ENCODE measurements at regions of chr14 and their contacts with region 1.

Region 1: DNA sequence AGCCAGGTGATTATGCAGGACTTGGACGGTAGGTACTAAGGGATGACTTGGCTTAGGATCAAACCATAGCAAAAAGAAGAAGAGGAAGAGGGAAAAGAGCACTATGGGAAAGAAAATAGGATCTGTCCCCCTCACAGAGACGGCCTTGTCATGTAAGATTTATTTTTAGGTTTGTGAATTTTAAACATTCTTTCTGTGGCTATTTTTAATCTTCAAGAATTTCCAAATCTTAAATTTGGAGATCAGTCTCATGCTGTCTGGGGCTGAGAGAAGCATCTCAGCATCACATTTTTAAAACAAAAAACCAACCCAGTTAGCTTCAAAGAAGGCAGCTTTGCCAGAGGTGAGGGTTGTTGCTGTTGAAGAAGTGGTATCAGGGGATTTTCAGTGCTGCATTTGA is 52.6 kb upstream of the STRN3 start:
- DNase-seq: no peak
- ATAC-seq: no peak
- H3K4me3 ChIP-seq: no peak overlapping the region
- H3K27ac ChIP-seq: no peak overlapping the region
- H3K4me1 ChIP-seq: peaks cover 0 to 3% of the 10 kb centered on the region in 2 donors
- H3K27me3 ChIP-seq: no peaks in the 10 kb centered on the region
- CTCF ChIP-seq: no peak
- POLR2A ChIP-seq: no peak

Region 2: DNA sequence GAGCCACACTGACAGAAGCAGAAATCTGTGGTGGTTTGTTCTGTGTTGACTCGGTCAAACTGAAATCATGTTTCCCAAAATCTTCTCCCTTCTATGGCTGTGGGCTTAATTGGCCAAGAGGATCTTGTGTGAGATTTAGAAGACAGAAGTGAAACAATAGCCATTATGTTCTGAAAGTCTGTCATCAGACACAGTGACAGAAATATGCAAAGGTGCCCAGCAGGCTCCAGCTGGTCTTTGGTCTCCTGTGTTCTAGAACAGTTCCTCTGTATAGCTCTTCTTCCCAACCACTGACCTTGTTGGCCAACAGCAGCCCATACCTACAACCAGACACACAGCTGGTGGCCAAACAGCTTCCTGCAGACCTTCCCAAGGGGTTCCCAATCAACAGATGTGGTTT is 229.4 kb before region 1 on chr14:
- in situ Hi-C with region 1: no loop called
- intact Hi-C with region 1: no loop called
- DNase-seq: no peak
- ATAC-seq: no peak
- H3K4me3 ChIP-seq: no peak overlapping the region
- H3K27ac ChIP-seq: no peak overlapping the region
- H3K4me1 ChIP-seq: no peaks in the 10 kb centered on the region
- H3K27me3 ChIP-seq: no peaks in the 10 kb centered on the region
- CTCF ChIP-seq: no peak
- POLR2A ChIP-seq: no peak

Region 3: DNA sequence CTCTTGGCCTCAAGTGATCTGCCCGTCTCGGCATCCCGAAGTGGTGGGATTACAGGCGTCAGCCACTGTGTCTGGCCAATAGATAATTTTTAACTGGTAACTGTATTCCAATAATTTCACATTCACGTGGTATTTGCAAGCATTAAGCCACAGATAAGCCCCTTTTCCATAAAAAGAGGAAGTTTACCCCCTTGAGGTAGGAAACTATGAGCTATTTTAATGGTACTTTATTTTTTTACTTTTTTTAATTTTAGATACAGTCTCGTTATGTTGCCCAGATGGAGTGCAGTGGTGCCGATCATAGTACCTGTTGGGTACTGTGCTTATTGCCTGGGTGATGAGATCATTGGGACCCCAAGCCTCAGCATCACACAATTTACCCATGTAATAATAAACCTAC is 96.2 kb before region 1 on chr14:
- in situ Hi-C with region 1: loop called (anchors 5 kb)
- intact Hi-C with region 1: no loop called
- DNase-seq: no peak
- ATAC-seq: no peak
- H3K4me3 ChIP-seq: no peak overlapping the region
- H3K27ac ChIP-seq: peak overlapping the region in 1 of 4 donors; percentile 25
- H3K4me1 ChIP-seq: no peaks in the 10 kb centered on the region
- H3K27me3 ChIP-seq: no peaks in the 10 kb centered on the region
- CTCF ChIP-seq: no peak
- POLR2A ChIP-seq: no peak

Region 4: DNA sequence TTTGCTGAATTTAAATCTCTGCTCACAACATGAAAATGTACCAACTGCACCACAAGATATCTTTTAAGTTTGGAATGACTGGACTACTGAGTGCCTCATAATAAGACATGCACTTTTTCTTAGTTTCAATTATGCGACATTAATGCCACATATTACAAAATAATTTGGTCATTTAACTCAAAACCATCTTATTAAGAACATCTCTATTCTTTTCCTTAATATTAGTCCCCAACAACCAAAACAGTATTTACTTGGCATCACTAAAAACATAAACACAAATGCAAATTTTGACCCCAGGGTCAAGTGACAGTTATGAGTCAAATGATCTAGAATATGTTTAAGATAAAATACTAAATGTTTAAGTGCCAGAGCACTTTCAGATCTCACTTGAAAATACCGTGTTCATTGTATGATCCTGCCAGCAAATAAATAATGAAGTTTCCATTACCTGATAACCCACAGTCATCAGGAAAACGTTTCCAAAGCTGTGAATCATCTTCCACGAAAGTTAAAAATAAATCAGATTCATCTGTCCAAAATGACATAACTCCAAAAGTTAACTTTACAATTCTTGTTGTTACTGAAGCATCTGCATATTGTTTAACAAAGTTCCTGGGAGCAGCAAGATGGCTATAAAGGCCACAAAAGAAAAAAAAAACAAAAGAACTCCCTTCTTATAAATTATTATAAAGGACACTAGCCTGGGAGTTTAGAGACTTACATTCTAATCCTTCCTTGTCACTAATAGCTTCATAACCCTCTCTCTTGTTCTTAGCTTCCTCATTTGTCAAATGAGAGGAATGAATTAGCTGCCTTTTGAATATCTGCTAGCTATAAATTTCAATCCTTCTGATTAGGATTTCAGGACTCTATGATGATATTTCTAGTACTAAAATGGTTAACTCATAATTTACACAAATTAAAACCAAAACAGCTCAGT is 83.8 kb before region 1 on chr14:
- in situ Hi-C with region 1: no loop called
- intact Hi-C with region 1: no loop called
- DNase-seq: no peak
- ATAC-seq: peak; percentile 77 to 81
- H3K4me3 ChIP-seq: peak overlapping the region in 3 of 4 donors; percentile 2 to 22 (median 8)
- H3K27ac ChIP-seq: peak overlapping the region; percentile 66 to 80 (median 79)
- H3K4me1 ChIP-seq: peaks cover 40 to 51% of the 10 kb centered on the region in 2 donors
- H3K27me3 ChIP-seq: no peaks in the 10 kb centered on the region
- CTCF ChIP-seq: no peak
- POLR2A ChIP-seq: no peak

Region 5: DNA sequence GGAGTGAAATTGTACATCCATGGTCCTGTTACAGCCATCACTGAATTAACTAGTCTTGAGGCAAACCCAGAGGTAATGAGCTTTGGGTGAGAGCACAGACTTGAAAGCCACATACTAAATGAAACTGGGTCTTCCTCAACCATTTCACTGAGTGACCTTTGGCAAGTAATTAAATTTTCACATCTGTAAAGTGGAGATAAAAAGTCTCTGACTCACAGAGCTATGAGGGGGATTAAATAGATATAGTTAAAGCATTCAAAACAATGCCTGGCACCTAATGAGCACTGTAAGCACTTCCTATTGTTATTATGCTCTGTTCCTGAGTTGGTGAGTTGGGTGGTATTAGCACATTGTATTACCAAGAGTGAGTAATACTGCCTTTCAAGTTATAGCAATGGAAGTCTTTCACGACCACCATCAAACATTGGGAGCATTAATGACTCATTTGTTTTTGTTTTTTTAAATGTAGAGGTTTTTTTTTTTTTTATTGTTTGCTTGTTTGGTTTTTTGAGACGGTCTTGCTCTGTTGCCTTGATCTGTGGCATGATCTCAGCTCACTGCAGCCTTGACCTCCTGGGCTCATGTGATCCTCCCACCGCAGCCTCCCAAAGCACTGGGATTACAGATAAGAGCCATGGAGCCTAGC is 40.1 kb before region 1 on chr14:
- in situ Hi-C with region 1: no loop called
- intact Hi-C with region 1: no loop called
- DNase-seq: no peak
- ATAC-seq: peak in 1 of 2 donors; percentile 56
- H3K4me3 ChIP-seq: no peak overlapping the region
- H3K27ac ChIP-seq: no peak overlapping the region
- H3K4me1 ChIP-seq: peaks cover 0 to 5% of the 10 kb centered on the region in 2 donors
- H3K27me3 ChIP-seq: no peaks in the 10 kb centered on the region
- CTCF ChIP-seq: no peak
- POLR2A ChIP-seq: no peak

Region 6: DNA sequence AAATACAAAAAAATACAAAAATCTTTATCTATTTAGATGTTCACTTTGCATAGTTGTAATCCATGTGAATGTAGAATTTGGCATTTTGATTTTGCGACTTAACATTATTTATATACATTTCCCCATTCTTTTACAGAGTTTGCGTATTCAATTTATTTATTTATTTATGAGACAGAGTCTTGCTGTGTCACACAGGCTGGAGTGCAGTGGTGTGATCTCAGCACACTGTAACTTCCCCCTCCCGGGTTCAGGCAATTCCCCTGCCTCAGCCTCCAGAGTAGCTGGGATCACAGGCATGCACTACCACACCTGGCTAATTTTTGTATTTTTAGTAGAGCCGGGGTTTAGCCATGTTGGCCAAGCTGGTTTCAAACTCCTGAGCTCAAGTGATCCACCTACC is 27.3 kb before region 1 on chr14:
- in situ Hi-C with region 1: no loop called
- intact Hi-C with region 1: no loop called
- DNase-seq: no peak
- ATAC-seq: no peak
- H3K4me3 ChIP-seq: no peak overlapping the region
- H3K27ac ChIP-seq: no peak overlapping the region
- H3K4me1 ChIP-seq: peaks cover 4 to 10% of the 10 kb centered on the region in 2 donors
- H3K27me3 ChIP-seq: no peaks in the 10 kb centered on the region
- CTCF ChIP-seq: no peak
- POLR2A ChIP-seq: no peak

Measured in gastrocnemius medialis (tissue), 4 donors.